Dendritic cell treated with granulocyte-macrophage colony-stimulating factor and Interleukin-4, amounts not matched to agents 40 ng/mL and 50 ng/mL, for 4 days (primary cell): ENCODE measurements at regions of chr4 and their contacts with region 1.

Region 1: GRCh38 chr4:168514249-168514852 is 17.5 kb downstream of the PALLD start:
- H3K4me3 Mint-ChIP-seq: no peak overlapping the region
- H3K27ac Mint-ChIP-seq: no peak overlapping the region
- H3K4me1 Mint-ChIP-seq: peaks cover 3% of the 10 kb centered on the region
- H3K27me3 Mint-ChIP-seq: no peaks in the 10 kb centered on the region

Region 2: DNA sequence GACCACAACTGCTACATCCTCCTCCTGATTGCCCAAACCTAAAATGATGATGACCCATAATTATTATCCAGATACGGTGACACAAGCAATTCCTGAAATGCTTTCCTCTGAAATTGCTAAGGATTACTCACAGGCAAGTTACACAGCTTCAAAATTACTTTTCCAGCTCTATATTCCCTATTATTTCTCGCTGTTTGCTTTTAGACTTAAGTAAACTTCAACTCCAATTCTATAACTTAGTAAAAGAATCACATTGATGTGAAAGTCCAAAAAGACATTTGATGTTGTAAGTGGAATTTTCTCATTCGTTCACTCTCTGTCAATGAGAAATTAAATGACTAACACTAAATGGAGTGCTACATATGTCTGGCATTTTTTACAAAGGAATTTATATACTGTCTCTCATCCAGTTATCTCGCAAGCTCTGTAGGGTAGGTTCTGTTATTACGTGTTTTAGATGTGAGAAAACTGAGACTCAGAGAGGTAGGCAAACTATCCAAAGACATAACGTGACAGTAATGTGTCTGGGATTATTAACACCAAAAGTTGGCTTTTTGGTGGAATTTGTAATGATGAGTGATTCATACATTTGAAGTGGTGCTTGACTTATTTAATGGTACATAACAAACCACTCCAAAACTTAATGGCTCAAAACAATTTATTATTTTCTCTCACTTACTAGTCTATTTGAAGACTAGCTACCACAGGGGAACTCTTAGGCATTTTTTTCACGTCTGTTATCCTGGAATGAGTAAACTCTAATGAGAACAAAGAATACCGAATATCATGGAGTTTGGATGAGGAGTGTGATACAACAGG is 14.0 kb after region 1 on chr4:
- intact Hi-C with region 1: no loop called
- H3K4me3 Mint-ChIP-seq: no peak overlapping the region
- H3K27ac Mint-ChIP-seq: no peak overlapping the region
- H3K4me1 Mint-ChIP-seq: peaks cover 9% of the 10 kb centered on the region
- H3K27me3 Mint-ChIP-seq: peaks cover 1% of the 10 kb centered on the region

Region 3: DNA sequence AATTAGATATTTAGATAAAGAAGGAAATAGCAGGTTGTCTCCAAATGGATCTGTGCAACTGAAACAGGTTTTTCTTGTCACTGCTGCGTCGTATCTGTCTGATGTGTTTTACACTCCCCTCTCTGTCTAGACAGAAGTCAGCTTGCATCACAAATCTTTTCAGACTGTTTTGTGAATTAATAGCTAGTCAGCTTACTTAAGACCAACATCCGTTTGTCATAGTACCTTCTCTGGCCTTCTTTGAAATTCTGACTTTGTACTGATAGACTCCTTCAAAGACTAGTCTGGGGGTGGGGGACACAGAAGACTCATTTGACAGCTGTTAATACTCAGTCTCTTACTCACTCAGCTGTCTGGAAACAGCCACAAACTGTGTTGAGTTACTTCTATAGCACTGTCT is 180.3 kb after region 1 on chr4:
- intact Hi-C with region 1: loop called (anchors 10 kb)
- H3K4me3 Mint-ChIP-seq: no peak overlapping the region
- H3K27ac Mint-ChIP-seq: no peak overlapping the region
- H3K4me1 Mint-ChIP-seq: no peaks in the 10 kb centered on the region
- H3K27me3 Mint-ChIP-seq: peaks cover 7% of the 10 kb centered on the region

Region 4: GRCh38 chr4:168917138-168917779 is 402.9 kb after region 1 on chr4:
- intact Hi-C with region 1: loop called (anchors 5 kb)
- H3K4me3 Mint-ChIP-seq: no peak overlapping the region
- H3K27ac Mint-ChIP-seq: no peak overlapping the region
- H3K4me1 Mint-ChIP-seq: no peaks in the 10 kb centered on the region
- H3K27me3 Mint-ChIP-seq: no peaks in the 10 kb centered on the region